ENCODE measurements at regions of chr18 and their contacts with region 1.

Region 1: DNA sequence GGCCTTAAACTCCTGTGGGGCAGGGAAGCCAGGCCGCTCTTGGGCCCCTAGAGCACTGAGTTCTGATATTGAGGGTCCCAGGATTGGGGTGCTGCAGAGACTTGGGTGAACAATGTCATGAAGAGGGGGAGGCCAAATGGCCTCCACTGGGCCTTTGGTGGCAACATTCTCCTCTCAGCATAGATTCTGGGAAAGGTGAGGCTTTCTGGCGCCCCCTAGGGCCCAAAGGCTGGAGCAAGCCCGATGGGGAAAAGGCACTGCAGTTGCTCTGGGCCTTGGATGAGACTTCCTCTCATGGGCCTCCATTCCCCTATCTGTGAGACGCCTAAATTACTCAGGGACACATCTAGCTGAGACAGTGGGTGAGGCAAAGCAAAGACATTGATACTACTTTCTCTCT is 84.8 kb downstream of the ACAA2 start:
- DNase-seq: peak in 1 of 2 experiments; percentile 42
- H3K4me3 ChIP-seq: no peak overlapping the region
- H3K27ac ChIP-seq: no peak overlapping the region
- H3K4me1 ChIP-seq: peaks cover 71% of the 10 kb centered on the region
- H3K27me3 ChIP-seq: no peaks in the 10 kb centered on the region
- CTCF ChIP-seq: peak; percentile 73

Region 2: DNA sequence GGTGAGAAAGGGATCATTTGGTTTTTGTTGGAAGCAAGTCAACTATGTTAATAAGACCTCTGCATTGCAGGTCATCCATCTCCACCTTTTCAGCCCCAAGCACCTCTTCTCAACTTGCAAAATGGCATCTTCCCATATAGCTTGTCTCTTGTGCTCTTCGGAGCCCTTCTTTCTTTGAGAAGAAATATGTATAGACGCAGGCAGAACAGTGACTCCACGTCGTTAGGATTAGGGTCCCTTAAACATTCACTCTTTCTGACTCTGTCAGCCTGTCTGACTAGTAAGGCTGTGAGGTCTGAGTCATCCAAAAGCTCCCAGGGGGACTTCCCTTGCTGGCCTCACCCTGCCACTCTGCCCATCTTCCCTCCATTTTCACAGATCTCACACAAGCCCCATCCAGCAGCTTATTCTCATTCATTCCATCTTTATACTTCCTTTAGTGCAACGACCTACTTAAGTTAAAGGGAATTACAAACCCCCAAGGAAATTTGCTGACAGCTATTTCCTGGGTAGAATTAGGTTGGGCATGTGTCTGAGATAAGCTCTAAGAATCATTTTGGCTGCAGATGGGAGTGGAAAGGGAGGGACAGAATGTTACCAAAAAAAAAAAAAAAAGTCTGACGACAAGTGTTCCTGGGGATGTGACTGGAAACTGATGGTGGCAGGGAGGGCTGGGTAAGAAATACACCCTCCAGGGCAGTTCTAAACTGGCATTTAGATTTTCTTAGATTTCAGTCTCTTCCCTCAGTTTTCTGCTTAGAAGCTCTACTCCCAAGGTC is 1506.7 kb after region 1 on chr18:
- CTCF ChIA-PET with region 1: interaction called, 19 read pairs
- POLR2A ChIA-PET with region 1: no interaction called
- intact Hi-C with region 1: no loop called
- DNase-seq: peak; percentile 26 to 59
- H3K4me3 ChIP-seq: peak overlapping the region; percentile 31; the same call in 1 of the 2 replicates
- H3K27ac ChIP-seq: peak overlapping the region; percentile 64
- H3K4me1 ChIP-seq: peaks cover 36% of the 10 kb centered on the region
- H3K27me3 ChIP-seq: no peaks in the 10 kb centered on the region
- CTCF ChIP-seq: no peak

Measured in PC-9 (cell line).